Common myeloid progenitor, CD34-positive (primary cell): ENCODE measurements at regions of chr17 and their contacts with region 1.

Region 1: GRCh38 chr17:42112552-42113176 is at the start of gene DHX58:
- DNase-seq: peak; percentile 87 to 93 (median 93)
- H3K4me3 ChIP-seq: peak within 1 kb of the TSS; percentile 30 to 87 (median 68)
- H3K27ac ChIP-seq: peak within 1 kb of the TSS; percentile 50 to 88
- H3K4me1 ChIP-seq: peaks cover 6 to 29% (median 25%) of the 10 kb centered on the region in 4 experiments
- H3K27me3 ChIP-seq: no peaks in the 10 kb centered on the region

Region 2: DNA sequence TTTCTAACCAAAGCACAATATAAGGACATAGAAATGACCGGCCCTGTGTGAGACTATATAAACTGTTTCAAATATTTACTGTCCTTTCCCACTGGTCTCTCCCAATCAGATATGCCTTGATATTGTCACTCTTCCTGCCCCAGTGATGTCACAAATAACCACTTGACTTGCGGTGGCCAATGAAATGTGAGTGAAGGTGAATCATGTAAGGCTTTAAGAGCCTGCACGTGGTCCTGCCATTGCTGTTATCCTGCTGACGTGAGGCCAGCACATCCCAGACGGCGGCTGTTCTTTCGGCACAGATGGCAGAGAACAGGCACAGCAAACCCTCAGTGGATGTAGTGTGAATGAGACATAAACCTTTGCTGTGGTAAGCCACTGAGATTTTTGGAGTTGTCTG is 242.0 kb before region 1 on chr17:
- CTCF ChIA-PET with region 1: no interaction called
- POLR2A ChIA-PET with region 1: no interaction called
- DNase-seq: no peak
- H3K4me3 ChIP-seq: no peak overlapping the region
- H3K27ac ChIP-seq: no peak overlapping the region
- H3K4me1 ChIP-seq: no peaks in the 10 kb centered on the region
- H3K27me3 ChIP-seq: no peaks in the 10 kb centered on the region

Region 3: DNA sequence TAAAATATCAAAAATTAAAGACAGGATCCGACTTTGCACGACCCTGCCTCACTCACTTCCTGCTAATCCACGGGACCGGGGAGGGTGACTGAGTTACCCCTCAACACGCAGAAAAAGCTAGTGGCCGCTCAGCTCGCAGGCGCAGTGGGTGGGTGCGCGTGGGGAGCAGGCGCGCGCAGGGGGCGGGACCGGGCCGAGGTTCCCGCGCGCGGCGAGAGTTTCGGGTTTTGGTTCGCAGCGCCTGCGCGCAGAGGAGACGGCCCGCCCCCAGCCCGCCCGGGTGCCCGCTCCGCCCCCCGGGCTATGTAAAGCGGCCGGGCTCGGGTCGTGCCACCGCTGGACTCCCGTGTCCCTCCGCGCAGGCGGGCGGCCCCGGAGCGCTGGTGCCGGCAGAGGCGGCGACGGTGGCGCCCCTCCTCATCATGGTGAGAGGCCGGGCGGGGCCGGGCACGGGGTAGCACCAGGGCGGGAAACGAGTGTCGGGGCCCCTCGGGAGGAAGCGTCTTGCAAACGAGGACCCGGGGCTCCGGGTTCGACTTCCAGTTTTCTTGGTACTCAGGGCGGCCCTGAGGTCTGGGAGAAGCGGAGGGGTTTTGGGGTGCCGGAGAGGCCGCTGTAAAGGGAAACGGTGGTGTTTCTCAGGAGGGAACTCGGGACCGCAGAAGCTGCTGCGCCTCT is 146.1 kb before region 1 on chr17 and contains the start of gene CNP:
- CTCF ChIA-PET with region 1: interaction called, 79 read pairs
- POLR2A ChIA-PET with region 1: interaction called, 3 read pairs
- DNase-seq: peak; percentile 92 to 96 (median 94)
- H3K4me3 ChIP-seq: peak within 1 kb of the TSS; percentile 72 to 86 (median 78)
- H3K27ac ChIP-seq: peak within 1 kb of the TSS; percentile 72 to 87
- H3K4me1 ChIP-seq: peaks cover 6 to 33% (median 22%) of the 10 kb centered on the region in 4 experiments
- H3K27me3 ChIP-seq: no peaks in the 10 kb centered on the region

Region 4: DNA sequence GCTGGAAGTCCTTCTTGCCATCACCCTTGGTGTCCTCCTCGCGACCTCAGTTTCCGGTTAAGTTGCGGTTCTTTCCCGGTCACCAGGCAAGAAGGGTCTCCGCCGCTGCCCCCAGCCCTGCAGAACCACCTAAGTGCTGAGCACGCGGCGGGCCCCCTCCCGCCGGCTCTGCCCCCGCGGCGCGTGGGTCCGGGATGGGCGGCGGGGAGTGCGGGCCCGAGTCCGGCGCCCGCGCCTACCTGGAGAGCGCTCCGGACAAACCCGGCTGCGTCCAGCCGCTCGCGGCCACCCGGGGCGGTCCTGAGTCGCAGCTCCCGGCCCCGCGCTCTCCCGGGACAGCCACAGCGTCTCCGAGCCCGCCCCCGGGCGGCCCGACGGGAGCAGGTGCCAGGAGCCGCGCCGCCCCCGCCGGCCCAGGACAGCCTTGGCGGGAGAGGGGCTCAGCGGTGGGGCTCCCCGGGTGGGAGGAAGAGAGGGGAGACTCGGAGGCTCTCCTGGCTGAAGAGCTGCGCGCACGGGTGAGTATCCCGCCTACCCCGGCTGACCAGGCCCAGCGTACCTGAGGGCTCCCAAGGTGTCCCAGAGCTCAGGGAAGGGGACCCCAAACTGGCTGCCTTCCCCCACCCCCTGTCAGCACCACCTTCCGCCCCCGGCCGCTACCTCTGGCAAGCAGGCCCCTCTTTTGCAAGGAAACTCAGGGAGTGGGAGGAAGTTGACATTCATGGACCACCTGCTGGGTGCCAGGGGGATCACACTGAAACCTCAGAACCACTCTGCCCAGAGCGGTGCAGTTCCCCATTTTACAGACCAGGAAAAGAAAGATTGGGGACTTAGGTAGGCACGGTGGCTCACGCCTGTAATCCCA is 40.1 kb before region 1 on chr17:
- CTCF ChIA-PET with region 1: interaction called, 90 read pairs
- POLR2A ChIA-PET with region 1: no interaction called
- DNase-seq: peak; percentile 34 to 75 (median 72)
- H3K4me3 ChIP-seq: peak overlapping the region; percentile 28 to 77 (median 59)
- H3K27ac ChIP-seq: no peak overlapping the region
- H3K4me1 ChIP-seq: peaks cover 0 to 29% (median 21%) of the 10 kb centered on the region in 4 experiments
- H3K27me3 ChIP-seq: no peaks in the 10 kb centered on the region

Region 5: GRCh38 chr17:42101513-42102319 is 10.9 kb before region 1 on chr17:
- CTCF ChIA-PET with region 1: interaction called, 24 read pairs
- POLR2A ChIA-PET with region 1: interaction called, 3 read pairs
- DNase-seq: peak; percentile 58 to 66 (median 58)
- H3K4me3 ChIP-seq: no peak overlapping the region
- H3K27ac ChIP-seq: no peak overlapping the region
- H3K4me1 ChIP-seq: peaks cover 0 to 18% (median 10%) of the 10 kb centered on the region in 4 experiments
- H3K27me3 ChIP-seq: peaks cover 0 to 14% (median 9%) of the 10 kb centered on the region in 5 experiments

Region 6: GRCh38 chr17:42322382-42323267 is 210.0 kb after region 1 on chr17:
- CTCF ChIA-PET with region 1: no interaction called
- POLR2A ChIA-PET with region 1: no interaction called
- DNase-seq: peak; percentile 96 to 98 (median 97)
- H3K4me3 ChIP-seq: peak overlapping the region in 2 of 7 experiments; percentile 19 to 38
- H3K27ac ChIP-seq: peak overlapping the region; percentile 98 to 99
- H3K4me1 ChIP-seq: peaks cover 24 to 56% (median 55%) of the 10 kb centered on the region in 4 experiments
- H3K27me3 ChIP-seq: no peaks in the 10 kb centered on the region